ENCODE measurements at regions of chr3 and their contacts with region 1.

Region 1: GRCh38 chr3:98359993-98360675 is 6.5 kb downstream of the OR5K4 start:
- DNase-seq: no peak
- ATAC-seq: no peak
- H3K4me3 ChIP-seq: no peak overlapping the region
- H3K27ac ChIP-seq: no peak overlapping the region
- H3K4me1 ChIP-seq: no peaks in the 10 kb centered on the region
- H3K27me3 ChIP-seq: no peaks in the 10 kb centered on the region
- CTCF ChIP-seq: no peak
- POLR2A ChIP-seq: no peak
- RAD21 ChIP-seq: no peak

Region 2: DNA sequence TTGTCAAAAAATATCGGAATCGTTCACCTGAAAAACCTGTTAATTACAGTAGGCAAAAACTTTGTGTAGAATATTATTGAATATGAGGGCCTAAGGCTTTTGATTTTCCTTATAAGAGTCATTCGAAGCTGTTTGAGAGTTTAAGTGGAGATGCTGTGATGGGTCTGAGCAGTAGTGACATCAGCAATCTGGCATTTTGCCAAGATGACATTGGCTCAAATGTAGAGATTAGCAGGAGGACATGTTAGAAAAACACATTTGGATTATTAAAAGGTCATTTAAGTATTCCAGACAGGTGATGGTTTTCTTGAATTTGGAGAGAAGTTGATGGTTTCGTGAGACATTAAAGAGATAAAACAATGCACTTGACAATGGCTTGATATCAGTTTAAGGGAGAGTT is 260.3 kb before region 1 on chr3:
- CTCF ChIA-PET with region 1: no interaction called
- POLR2A ChIA-PET with region 1: no interaction called
- dilution Hi-C with region 1: no loop called
- in situ Hi-C with region 1: no loop called
- intact Hi-C with region 1: no loop called
- DNase-seq: no peak
- ATAC-seq: no peak
- H3K4me3 ChIP-seq: no peak overlapping the region
- H3K27ac ChIP-seq: no peak overlapping the region
- H3K4me1 ChIP-seq: no peaks in the 10 kb centered on the region
- H3K27me3 ChIP-seq: no peaks in the 10 kb centered on the region
- CTCF ChIP-seq: no peak
- POLR2A ChIP-seq: no peak
- RAD21 ChIP-seq: no peak

Region 3: GRCh38 chr3:98449606-98450193 is 89.6 kb after region 1 on chr3:
- CTCF ChIA-PET with region 1: no interaction called
- POLR2A ChIA-PET with region 1: no interaction called
- dilution Hi-C with region 1: no loop called
- in situ Hi-C with region 1: loop called (anchors 25 kb)
- intact Hi-C with region 1: no loop called
- DNase-seq: no peak
- ATAC-seq: no peak
- H3K4me3 ChIP-seq: no peak overlapping the region
- H3K27ac ChIP-seq: no peak overlapping the region
- H3K4me1 ChIP-seq: no peaks in the 10 kb centered on the region
- H3K27me3 ChIP-seq: no peaks in the 10 kb centered on the region
- CTCF ChIP-seq: no peak
- POLR2A ChIP-seq: no peak
- RAD21 ChIP-seq: no peak

Measured in IMR-90 (cell line).